ENCODE measurements at regions of chr1 and their contacts with region 1.

Region 1: DNA sequence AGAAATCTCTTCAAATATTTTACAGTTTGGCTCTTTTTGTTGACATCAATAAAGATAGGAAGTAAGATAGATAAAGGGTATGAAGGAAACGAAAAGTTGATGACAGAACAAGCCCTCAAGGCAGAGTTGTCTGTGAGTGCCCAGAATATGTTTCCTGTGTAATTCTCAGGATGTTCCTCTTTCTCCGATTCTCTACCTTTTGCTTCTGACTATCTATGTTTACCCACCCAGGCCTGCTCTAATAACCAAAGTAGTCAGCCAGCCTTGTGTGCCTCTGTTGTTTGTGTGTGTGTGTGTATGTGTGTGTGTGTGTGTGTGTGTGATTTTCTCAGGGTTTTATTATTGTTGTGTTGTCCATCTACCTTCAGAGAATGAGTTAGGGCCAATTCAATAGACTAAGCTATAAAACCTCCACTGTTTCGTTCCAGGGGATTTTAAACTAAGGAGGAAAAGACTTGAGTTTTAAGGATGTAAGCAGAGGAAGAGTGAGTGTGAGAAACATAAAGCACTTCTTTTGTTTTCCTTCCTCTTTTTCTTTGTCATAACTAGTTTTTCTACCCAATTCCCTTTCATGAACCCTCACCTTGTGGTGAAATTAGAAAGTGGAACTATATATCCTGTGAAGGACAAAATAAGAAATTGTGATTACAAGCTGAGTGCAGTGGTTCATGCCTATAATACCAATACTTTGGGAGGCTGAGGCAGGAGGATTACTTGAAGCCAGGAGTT is 627.4 kb upstream of the NR5A2 start:
- DNase-seq: no peak
- ATAC-seq: no peak
- H3K4me3 ChIP-seq: no peak overlapping the region
- H3K27ac ChIP-seq: no peak overlapping the region
- H3K4me1 ChIP-seq: peaks cover 0 to 3% (median 0%) of the 10 kb centered on the region in 9 donors
- H3K27me3 ChIP-seq: no peaks in the 10 kb centered on the region
- CTCF ChIP-seq: no peak

Region 2: GRCh38 chr1:199336745-199337640 is 63.2 kb before region 1 on chr1:
- intact Hi-C with region 1: loop called in 1 of 10 experiments (anchors 2 kb)
- DNase-seq: no peak
- ATAC-seq: no peak
- H3K4me3 ChIP-seq: no peak overlapping the region
- H3K27ac ChIP-seq: no peak overlapping the region
- H3K4me1 ChIP-seq: no peaks in the 10 kb centered on the region
- H3K27me3 ChIP-seq: no peaks in the 10 kb centered on the region
- CTCF ChIP-seq: no peak

Measured in heart right ventricle (tissue), 16 donors.